Activated CD8-positive, alpha-beta T cell treated with anti-CD3 and anti-CD28 coated beads for 36 hours (primary cell): ENCODE measurements at regions of chr2 and their contacts with region 1.

Region 1: DNA sequence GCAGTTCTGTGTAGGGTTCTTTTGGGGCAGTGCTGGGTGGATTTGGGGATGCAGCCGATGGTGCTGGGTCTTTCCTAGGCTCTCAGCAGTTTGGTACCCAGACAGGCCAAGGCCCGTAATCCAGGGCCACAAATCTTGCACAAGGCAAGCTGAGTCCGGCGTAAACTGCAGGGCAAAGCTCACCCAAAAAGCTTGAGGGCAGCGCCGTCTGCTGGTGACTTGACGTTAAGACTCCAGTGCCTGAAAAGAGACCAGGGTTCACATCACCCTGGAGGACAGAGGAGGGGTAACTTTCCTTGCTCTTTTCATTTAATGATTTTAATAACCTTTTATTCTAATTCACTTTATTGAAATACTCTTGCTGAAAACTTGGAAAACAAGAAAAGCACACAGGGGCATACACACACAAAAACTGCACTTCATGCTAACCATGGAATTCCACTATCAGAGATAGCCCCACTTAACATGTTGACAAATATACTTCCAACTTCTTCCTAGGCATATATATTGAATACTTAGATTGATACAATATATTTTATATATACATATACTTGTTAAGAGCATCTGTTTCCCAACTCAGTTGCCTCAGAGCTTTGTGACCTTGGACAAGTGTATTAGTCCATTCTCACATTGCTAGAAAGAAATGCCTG is 38.9 kb downstream of the CNGA3 start:
- DNase-seq: peak; percentile 85
- ATAC-seq: peak; percentile 84
- H3K4me3 Mint-ChIP-seq: no peak overlapping the region
- H3K27ac Mint-ChIP-seq: no peak overlapping the region
- H3K4me1 Mint-ChIP-seq: no peaks in the 10 kb centered on the region
- H3K27me3 Mint-ChIP-seq: peaks cover 4% of the 10 kb centered on the region
- CTCF ChIP-seq: peak; percentile 96

Region 2: GRCh38 chr2:98374958-98375570 is 10.1 kb before region 1 on chr2:
- CTCF ChIA-PET with region 1: interaction called, 15 read pairs
- POLR2A ChIA-PET with region 1: no interaction called
- intact Hi-C with region 1: no loop called
- DNase-seq: no peak
- ATAC-seq: no peak
- H3K4me3 Mint-ChIP-seq: no peak overlapping the region
- H3K27ac Mint-ChIP-seq: no peak overlapping the region
- H3K4me1 Mint-ChIP-seq: no peaks in the 10 kb centered on the region
- H3K27me3 Mint-ChIP-seq: peaks cover 15% of the 10 kb centered on the region
- CTCF ChIP-seq: no peak

Region 3: GRCh38 chr2:98654699-98655495 is 269.7 kb after region 1 on chr2:
- CTCF ChIA-PET with region 1: no interaction called
- POLR2A ChIA-PET with region 1: no interaction called
- intact Hi-C with region 1: no loop called
- DNase-seq: peak; percentile 76
- ATAC-seq: peak; percentile 64
- H3K4me3 Mint-ChIP-seq: peak overlapping the region; percentile 51
- H3K27ac Mint-ChIP-seq: peak overlapping the region; percentile 88
- H3K4me1 Mint-ChIP-seq: peaks cover 78% of the 10 kb centered on the region
- H3K27me3 Mint-ChIP-seq: no peaks in the 10 kb centered on the region
- CTCF ChIP-seq: no peak